Aorta (tissue), 5 donors: ENCODE measurements at regions of chr17 and their contacts with region 1.

Region 1: DNA sequence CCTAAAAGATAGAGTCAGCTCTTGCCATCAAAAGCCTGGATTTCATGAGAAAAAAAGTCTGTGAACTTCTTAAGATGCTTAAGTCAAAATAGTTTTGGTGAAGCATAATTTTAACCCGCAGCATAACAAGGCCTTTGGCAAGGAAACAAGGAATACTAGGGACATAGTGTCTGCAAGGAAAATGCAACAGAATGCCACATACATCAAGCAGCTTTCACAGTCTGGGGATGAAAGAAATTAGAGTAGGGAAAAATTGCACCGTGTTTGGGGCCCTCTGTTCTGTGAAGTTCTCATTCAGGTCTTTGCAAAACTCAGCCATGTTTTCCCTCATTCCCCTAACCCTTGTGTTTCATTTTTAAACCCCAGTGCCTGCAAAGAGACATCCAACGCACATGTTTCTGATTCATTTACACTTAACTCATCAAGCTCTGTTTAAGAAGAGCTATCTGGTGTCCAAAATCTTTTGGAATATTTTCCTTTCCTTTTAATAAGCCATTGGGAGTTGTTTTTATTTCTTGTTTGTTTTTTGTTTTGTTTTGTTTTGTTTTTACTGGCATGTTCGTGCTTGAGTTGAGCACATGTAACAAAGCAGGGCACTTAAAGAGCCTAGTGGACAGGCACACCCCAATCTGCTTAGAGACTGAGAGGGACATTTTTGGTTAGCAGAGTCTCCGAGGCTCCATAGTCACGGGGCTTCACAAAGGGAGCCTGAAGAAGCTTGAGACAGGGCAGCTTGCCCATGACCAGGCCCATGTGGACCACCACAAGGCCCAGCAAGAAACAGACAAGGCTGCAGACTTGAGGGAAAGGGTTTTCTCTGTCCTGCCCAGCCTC is 116.5 kb downstream of the ANKFN1 start:
- DNase-seq: no peak
- ATAC-seq: no peak
- H3K4me3 ChIP-seq: no peak overlapping the region
- H3K27ac ChIP-seq: no peak overlapping the region
- H3K4me1 ChIP-seq: no peaks in the 10 kb centered on the region
- H3K27me3 ChIP-seq: no peaks in the 10 kb centered on the region

Region 2: GRCh38 chr17:56292010-56292409 is 22.2 kb after region 1 on chr17:
- intact Hi-C with region 1: no loop called
- DNase-seq: no peak
- ATAC-seq: peak; percentile 52
- H3K4me3 ChIP-seq: no peak overlapping the region
- H3K27ac ChIP-seq: no peak overlapping the region
- H3K4me1 ChIP-seq: peaks cover 5 to 6% of the 10 kb centered on the region in 2 donors
- H3K27me3 ChIP-seq: no peaks in the 10 kb centered on the region

Region 3: DNA sequence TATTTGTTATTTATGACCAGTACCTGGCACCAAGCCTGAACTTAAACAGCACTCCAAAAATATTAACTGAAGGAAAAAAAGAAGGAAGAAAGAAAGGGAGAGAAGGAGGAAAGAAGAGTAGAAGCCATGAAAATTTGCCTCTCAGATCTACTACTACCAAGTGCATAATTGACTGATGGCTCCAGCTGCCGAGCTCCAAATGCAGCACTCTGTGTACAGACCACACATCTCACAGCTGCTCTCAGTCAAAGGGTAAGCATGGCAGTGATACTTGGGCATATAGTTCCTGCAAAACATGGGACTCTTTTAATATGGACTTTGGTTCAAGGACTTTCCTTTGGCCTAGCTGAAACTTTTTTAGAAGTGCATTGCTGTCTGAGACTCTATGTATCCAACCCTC is 279.7 kb after region 1 on chr17:
- intact Hi-C with region 1: loop called in 1 of 2 experiments (anchors 5 kb)
- DNase-seq: no peak
- ATAC-seq: no peak
- H3K4me3 ChIP-seq: no peak overlapping the region
- H3K27ac ChIP-seq: no peak overlapping the region
- H3K4me1 ChIP-seq: no peaks in the 10 kb centered on the region
- H3K27me3 ChIP-seq: no peaks in the 10 kb centered on the region